CD8-positive, alpha-beta memory T cell (primary cell): ENCODE measurements at regions of chr1 and their contacts with region 1.

Region 1: DNA sequence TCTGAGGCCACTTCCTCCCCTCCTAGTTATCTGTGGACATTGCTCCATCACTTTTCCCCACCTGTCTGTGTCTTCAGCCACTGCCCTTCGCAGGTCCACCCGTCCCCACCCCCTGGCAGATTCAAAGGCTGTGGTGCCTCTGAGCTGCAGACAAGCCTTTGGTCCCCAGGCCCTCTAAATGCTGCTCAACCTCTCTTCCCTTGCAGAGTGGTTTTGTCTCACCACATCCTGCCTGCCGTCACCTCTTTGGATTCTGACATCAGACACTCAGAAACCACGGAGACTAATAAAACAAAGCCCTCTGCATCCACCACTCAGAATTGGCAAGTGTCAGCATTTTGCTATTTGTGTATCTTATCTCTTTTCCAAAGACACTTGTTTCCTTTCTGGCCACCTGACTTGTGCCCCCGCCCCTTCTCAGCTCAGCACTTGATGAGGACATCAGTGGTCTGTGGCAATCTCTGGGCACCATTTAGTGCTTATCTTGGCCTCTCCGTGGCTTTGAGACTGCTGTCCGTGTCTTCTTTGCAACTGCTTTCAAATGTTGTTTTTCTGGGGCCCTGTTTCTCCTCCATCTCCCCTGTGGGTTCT is 7.7 kb downstream of the CNIH3 start:
- DNase-seq: peak; percentile 56 to 91 (median 81)
- H3K4me3 ChIP-seq: peak overlapping the region; percentile 44
- H3K4me3 Mint-ChIP-seq: peak overlapping the region; percentile 6 to 88 (median 64)
- H3K27ac ChIP-seq: peak overlapping the region; percentile 77
- H3K27ac Mint-ChIP-seq: peak overlapping the region; percentile 79 to 99 (median 97)
- H3K4me1 ChIP-seq: peaks cover 29% of the 10 kb centered on the region
- H3K4me1 Mint-ChIP-seq: peaks cover 24 to 42% (median 38%) of the 10 kb centered on the region in 3 donors
- H3K27me3 ChIP-seq: peaks cover under 1% of the 10 kb centered on the region
- H3K27me3 Mint-ChIP-seq: peaks cover 15 to 31% of the 10 kb centered on the region in 2 donors

Region 2: DNA sequence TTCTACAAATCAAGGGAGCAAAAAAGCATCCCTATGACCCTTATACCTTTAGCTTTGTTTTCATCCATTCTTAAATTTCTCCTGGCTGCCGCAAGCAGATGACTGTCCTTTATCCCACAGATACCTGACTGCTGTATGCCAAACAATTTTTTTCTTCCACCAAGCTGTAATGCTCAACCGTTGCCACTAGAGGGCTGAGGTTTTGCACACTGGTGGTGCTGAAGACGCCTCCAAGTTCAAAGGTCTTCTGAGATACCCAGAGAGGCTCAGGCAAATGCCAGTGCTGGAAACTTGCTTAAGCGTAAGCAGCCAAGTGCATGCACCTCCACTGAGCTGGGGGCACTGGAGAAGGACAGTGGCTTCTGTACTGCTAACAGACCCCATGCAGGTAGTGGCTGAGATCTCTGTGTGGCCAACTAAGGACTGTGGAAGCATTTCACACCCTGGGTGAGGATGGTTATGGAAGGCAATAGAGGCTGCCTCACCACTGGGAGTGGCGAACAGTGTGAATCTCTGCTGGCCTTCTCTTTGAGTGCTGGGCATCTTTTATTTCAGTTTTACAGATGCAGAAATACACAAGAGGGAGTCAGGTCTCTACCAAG is 20.8 kb after region 1 on chr1:
- CTCF ChIA-PET with region 1: interaction called, 14 read pairs
- POLR2A ChIA-PET with region 1: no interaction called
- DNase-seq: peak; percentile 27 to 70 (median 32)
- H3K4me3 ChIP-seq: no peak overlapping the region
- H3K4me3 Mint-ChIP-seq: no peak overlapping the region
- H3K27ac ChIP-seq: no peak overlapping the region
- H3K27ac Mint-ChIP-seq: no peak overlapping the region
- H3K4me1 ChIP-seq: no peaks in the 10 kb centered on the region
- H3K4me1 Mint-ChIP-seq: no peaks in the 10 kb centered on the region
- H3K27me3 ChIP-seq: no peaks in the 10 kb centered on the region
- H3K27me3 Mint-ChIP-seq: peaks cover 6 to 19% of the 10 kb centered on the region in 2 donors

Region 3: GRCh38 chr1:224684979-224685425 is 61.2 kb after region 1 on chr1:
- CTCF ChIA-PET with region 1: no interaction called
- POLR2A ChIA-PET with region 1: no interaction called
- DNase-seq: no peak
- H3K4me3 ChIP-seq: no peak overlapping the region
- H3K4me3 Mint-ChIP-seq: no peak overlapping the region
- H3K27ac ChIP-seq: no peak overlapping the region
- H3K27ac Mint-ChIP-seq: no peak overlapping the region
- H3K4me1 ChIP-seq: no peaks in the 10 kb centered on the region
- H3K4me1 Mint-ChIP-seq: no peaks in the 10 kb centered on the region
- H3K27me3 ChIP-seq: no peaks in the 10 kb centered on the region
- H3K27me3 Mint-ChIP-seq: peaks cover 8 to 17% of the 10 kb centered on the region in 2 donors